Sciatic nerve (tissue), 2 donors: ENCODE measurements at regions of chr21 and their contacts with region 1.

Region 1: DNA sequence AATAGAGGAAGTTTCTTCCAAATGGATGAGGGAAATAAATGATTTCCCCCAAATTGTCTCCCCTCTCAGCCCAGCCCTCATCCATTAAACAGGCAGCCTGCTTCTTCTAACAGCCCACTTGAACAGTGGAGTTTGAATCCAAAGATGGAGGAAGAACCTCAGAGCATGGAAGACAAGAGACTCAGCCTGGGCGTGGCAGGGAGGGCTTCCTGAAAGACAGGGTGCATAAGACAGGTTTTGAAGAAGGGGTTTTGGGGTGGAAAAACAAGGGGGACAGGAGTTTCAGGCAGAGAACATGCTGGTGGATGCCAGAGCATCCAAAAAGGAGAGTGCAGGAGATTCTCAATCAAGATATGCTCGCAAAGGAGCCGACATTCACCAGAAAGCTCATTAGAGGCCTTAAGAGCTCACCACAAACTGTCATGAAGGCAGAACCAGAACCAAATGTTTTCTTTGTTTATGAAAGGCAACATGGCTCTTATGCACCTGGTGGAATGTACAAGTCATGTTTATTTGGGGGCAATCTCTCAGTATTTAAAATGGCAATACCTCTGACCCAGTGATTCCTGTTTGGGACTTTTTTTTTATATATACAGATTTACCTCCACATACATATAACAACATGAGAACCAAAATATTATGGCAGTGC is 26.5 kb upstream of the TSPEAR start:
- DNase-seq: no peak
- ATAC-seq: no peak

Region 2: GRCh38 chr21:45330075-45330781 is 592.4 kb after region 1 on chr21:
- intact Hi-C with region 1: loop called (anchors 5 kb)
- DNase-seq: peak; percentile 61
- ATAC-seq: peak; percentile 69